Mammary epithelial cell (primary cell): ENCODE measurements at regions of chr7 and their contacts with region 1.

Region 1: GRCh38 chr7:27095897-27096767 is at the start of gene HOXA1:
- DNase-seq: peak; percentile 92
- H3K4me3 ChIP-seq: peak within 1 kb of the TSS; percentile 82 to 97 (median 91)
- H3K27ac ChIP-seq: peak within 1 kb of the TSS; percentile 97
- H3K4me1 ChIP-seq: peaks cover 26% of the 10 kb centered on the region
- H3K27me3 ChIP-seq: no peaks in the 10 kb centered on the region
- CTCF ChIP-seq: no peak
- total RNA-seq, gene HOXA1: 2.5 to 9.4 TPM

Region 2: GRCh38 chr7:26853788-26854393 is 242.2 kb before region 1 on chr7:
- CTCF ChIA-PET with region 1: interaction called, 4 read pairs
- dilution Hi-C with region 1: loop called (anchors 5 kb)
- in situ Hi-C with region 1: loop called in 1 of 2 experiments (anchors 5 kb)
- intact Hi-C with region 1: loop called (anchors 1 kb)
- DNase-seq: peak; percentile 52
- H3K4me3 ChIP-seq: peak overlapping the region in 1 of 3 experiments; percentile 19
- H3K27ac ChIP-seq: peak overlapping the region; percentile 96
- H3K4me1 ChIP-seq: peaks cover 24% of the 10 kb centered on the region
- H3K27me3 ChIP-seq: no peaks in the 10 kb centered on the region
- CTCF ChIP-seq: peak; percentile 48 to 65

Region 3: DNA sequence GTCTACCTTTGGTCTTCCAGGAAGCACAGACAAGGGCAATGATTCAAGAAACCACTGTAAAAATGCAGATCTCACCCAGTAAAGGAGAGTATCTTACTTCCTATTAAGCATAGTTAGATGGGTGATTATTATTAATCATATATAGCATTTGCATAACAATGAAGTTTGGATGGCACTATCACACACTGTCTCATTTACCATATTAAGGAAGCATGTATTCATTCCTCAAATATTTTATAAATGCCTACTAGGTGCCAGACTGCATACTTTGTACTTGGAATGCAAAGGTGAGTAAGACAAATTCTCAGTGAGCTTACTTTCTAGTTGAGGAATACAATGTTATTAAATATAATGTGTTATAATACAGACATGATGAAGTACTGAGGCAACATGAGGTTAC is 177.9 kb before region 1 on chr7:
- CTCF ChIA-PET with region 1: no interaction called
- dilution Hi-C with region 1: no loop called
- in situ Hi-C with region 1: no loop called
- intact Hi-C with region 1: loop called (anchors 1 kb)
- DNase-seq: peak; percentile 58
- H3K4me3 ChIP-seq: no peak overlapping the region
- H3K27ac ChIP-seq: peak overlapping the region; percentile 44
- H3K4me1 ChIP-seq: peaks cover 33% of the 10 kb centered on the region
- H3K27me3 ChIP-seq: no peaks in the 10 kb centered on the region
- CTCF ChIP-seq: no peak

Region 4: GRCh38 chr7:26993816-26994810 is 102.0 kb before region 1 on chr7:
- CTCF ChIA-PET with region 1: no interaction called
- dilution Hi-C with region 1: no loop called
- in situ Hi-C with region 1: no loop called
- intact Hi-C with region 1: loop called (anchors 1 kb)
- DNase-seq: peak; percentile 47
- H3K4me3 ChIP-seq: no peak overlapping the region
- H3K27ac ChIP-seq: peak overlapping the region; percentile 61
- H3K4me1 ChIP-seq: peaks cover 34% of the 10 kb centered on the region
- H3K27me3 ChIP-seq: no peaks in the 10 kb centered on the region
- CTCF ChIP-seq: no peak

Region 5: GRCh38 chr7:27046854-27047549 is 49.1 kb before region 1 on chr7:
- CTCF ChIA-PET with region 1: interaction called, 6 read pairs
- dilution Hi-C with region 1: no loop called
- in situ Hi-C with region 1: no loop called
- intact Hi-C with region 1: loop called (anchors 5 kb)
- DNase-seq: peak; percentile 52
- H3K4me3 ChIP-seq: peak overlapping the region in 1 of 3 experiments; percentile 20
- H3K27ac ChIP-seq: no peak overlapping the region
- H3K4me1 ChIP-seq: peaks cover 4% of the 10 kb centered on the region
- H3K27me3 ChIP-seq: no peaks in the 10 kb centered on the region
- CTCF ChIP-seq: no peak